Activated CD4-positive, alpha-beta T cell treated with anti-CD3 and anti-CD28 coated beads, Interleukin-2, amount 10 ng/mL, durations not matched to agents 24 days and 14 days (primary cell): ENCODE measurements at regions of chr11 and their contacts with region 1.

Region 1: GRCh38 chr11:128630367-128631230 is 43.2 kb upstream of the ETS1 start:
- DNase-seq: peak; percentile 96
- H3K4me3 Mint-ChIP-seq: peak overlapping the region; percentile 69
- H3K27ac Mint-ChIP-seq: peak overlapping the region; percentile 92
- H3K4me1 Mint-ChIP-seq: peaks cover 61% of the 10 kb centered on the region
- H3K27me3 Mint-ChIP-seq: no peaks in the 10 kb centered on the region

Region 2: DNA sequence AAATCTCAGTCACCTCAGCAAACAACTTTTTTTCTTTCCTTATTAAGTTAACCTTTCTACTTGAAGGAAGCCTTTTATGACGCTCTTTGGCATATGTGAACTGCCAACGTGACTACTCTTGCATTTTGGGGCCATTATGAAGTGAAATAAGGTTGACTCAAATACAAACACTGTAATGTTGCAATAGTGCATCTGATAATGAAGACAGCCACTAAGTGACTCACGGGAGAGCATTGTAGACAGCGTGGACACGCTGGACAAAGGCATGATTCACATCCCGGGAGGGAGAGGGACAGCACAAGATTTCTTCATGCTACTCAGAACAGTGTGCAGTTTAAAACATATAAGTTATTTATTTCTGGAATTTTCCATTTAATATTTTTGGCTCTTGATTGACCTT is 604.0 kb before region 1 on chr11:
- intact Hi-C with region 1: loop called (anchors 2 kb)
- DNase-seq: no peak
- H3K4me3 Mint-ChIP-seq: no peak overlapping the region
- H3K27ac Mint-ChIP-seq: no peak overlapping the region
- H3K4me1 Mint-ChIP-seq: peaks cover 9% of the 10 kb centered on the region
- H3K27me3 Mint-ChIP-seq: peaks cover 37% of the 10 kb centered on the region

Region 3: GRCh38 chr11:128157423-128158298 is 472.9 kb before region 1 on chr11:
- intact Hi-C with region 1: loop called (anchors 1 kb)
- DNase-seq: peak; percentile 90
- H3K4me3 Mint-ChIP-seq: peak overlapping the region; percentile 63
- H3K27ac Mint-ChIP-seq: peak overlapping the region; percentile 78
- H3K4me1 Mint-ChIP-seq: peaks cover 10% of the 10 kb centered on the region
- H3K27me3 Mint-ChIP-seq: peaks cover 3% of the 10 kb centered on the region

Region 4: DNA sequence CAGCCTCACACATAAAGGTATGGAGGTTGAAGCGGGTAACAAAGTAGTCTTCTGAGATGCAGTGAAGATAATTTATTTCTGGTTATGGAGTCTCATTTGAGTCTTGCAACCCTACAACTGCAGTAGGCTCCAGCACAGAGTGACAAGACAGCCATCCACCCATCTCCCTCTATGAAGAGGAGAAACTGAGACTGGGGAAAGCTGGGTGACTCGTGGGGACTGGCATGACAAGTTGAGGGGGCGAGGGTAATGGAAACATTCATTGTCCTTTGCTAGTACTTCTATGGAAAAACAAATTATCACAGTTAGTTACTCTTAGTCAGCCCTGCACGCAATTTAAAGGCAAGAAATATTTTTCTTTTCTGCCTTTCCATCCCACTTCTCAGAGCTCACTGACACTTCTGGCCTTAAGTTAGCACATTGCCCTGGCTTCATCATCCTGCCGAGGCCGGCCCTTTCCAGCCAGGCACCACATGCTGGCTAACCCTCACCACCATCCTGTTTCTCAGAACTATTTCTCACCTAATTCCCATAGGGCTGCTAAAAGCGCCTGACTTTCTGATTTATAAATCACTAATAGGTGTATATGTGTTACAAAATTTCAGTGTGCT is 404.4 kb before region 1 on chr11:
- intact Hi-C with region 1: loop called (anchors 2 kb)
- DNase-seq: peak; percentile 58
- H3K4me3 Mint-ChIP-seq: peak overlapping the region; percentile 39
- H3K27ac Mint-ChIP-seq: peak overlapping the region; percentile 91
- H3K4me1 Mint-ChIP-seq: peaks cover 33% of the 10 kb centered on the region
- H3K27me3 Mint-ChIP-seq: no peaks in the 10 kb centered on the region

Region 5: DNA sequence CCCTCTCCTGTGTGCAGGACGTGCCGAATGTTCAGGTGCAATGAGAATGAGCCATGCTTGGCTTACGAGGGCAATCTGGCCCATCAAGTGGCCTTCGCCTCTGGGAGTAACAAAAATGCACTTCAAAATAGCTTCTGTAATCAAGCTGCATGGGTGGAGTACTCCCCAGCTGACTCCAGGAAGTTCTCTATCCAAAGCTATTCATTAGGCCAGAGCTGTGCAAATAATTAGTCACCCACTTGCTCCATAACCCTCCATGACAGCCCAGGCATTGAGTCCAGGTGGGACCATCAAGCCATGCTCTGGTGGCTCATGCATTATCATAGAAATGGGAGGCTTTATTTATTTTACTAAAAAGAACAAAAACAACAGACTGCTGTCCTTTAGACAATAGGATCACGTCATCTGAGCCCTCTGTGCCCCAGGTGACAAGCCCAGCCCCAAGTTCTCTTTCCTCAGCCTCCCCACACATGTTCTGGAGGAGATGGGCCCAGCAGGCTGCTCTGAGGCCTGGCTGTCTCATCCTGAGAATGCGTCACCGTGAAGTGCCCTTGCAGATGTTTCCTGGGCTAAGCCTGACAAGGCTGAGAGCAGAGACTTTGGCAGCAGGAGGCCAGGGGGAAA is 288.0 kb before region 1 on chr11:
- intact Hi-C with region 1: loop called (anchors 1 kb)
- DNase-seq: peak; percentile 90
- H3K4me3 Mint-ChIP-seq: peak overlapping the region; percentile 24
- H3K27ac Mint-ChIP-seq: peak overlapping the region; percentile 88
- H3K4me1 Mint-ChIP-seq: peaks cover 79% of the 10 kb centered on the region
- H3K27me3 Mint-ChIP-seq: no peaks in the 10 kb centered on the region

Region 6: GRCh38 chr11:128551611-128552335 is 78.8 kb before region 1 on chr11:
- intact Hi-C with region 1: loop called (anchors 2 kb)
- DNase-seq: peak; percentile 72
- H3K4me3 Mint-ChIP-seq: peak overlapping the region; percentile 24
- H3K27ac Mint-ChIP-seq: peak overlapping the region; percentile 79
- H3K4me1 Mint-ChIP-seq: peaks cover 57% of the 10 kb centered on the region
- H3K27me3 Mint-ChIP-seq: no peaks in the 10 kb centered on the region

Region 7: DNA sequence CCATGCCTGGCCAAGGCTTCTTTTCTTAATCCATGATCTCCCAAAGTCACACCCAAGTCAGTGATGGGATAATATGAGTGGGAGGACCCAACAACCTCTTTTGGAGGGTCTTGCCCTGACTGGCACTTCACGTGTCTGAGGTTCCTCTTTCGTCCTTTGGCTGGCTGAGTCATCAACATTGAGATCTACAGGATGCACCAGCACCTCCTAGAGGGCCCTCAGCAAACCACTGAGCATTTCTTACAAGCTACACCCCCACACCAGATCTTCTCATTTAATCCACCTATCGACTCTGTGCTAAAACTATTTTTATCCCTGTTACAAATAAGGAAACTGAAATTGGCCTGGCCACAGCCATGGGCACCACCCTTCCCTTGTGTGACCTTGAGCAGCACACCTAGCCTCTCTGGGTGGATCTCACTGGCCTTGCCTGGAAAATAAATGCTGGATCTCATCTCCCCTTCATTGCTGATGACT is 126.7 kb after region 1 on chr11:
- intact Hi-C with region 1: loop called (anchors 1 kb)
- DNase-seq: peak; percentile 89
- H3K4me3 Mint-ChIP-seq: peak overlapping the region; percentile 37
- H3K27ac Mint-ChIP-seq: peak overlapping the region; percentile 90
- H3K4me1 Mint-ChIP-seq: peaks cover 59% of the 10 kb centered on the region
- H3K27me3 Mint-ChIP-seq: no peaks in the 10 kb centered on the region

Region 8: GRCh38 chr11:128772814-128773213 is 142.2 kb after region 1 on chr11:
- intact Hi-C with region 1: no loop called
- DNase-seq: peak; percentile 61
- H3K4me3 Mint-ChIP-seq: no peak overlapping the region
- H3K27ac Mint-ChIP-seq: peak overlapping the region; percentile 18
- H3K4me1 Mint-ChIP-seq: peaks cover 21% of the 10 kb centered on the region
- H3K27me3 Mint-ChIP-seq: no peaks in the 10 kb centered on the region